ENCODE measurements at regions of chr13 and their contacts with region 1.

Region 1: GRCh38 chr13:49936085-49936940 is at the start of gene SPRYD7:
- DNase-seq: peak; percentile 98
- ATAC-seq: peak; percentile 97
- H3K4me3 ChIP-seq: peak within 1 kb of the TSS; percentile 76 to 94 (median 84)
- H3K4me3 Mint-ChIP-seq: peak within 1 kb of the TSS; percentile 88
- H3K27ac ChIP-seq: peak within 1 kb of the TSS; percentile 64 to 90
- H3K27ac Mint-ChIP-seq: peak within 1 kb of the TSS; percentile 86
- H3K4me1 ChIP-seq: peaks cover 15 to 17% of the 10 kb centered on the region in 2 donors
- H3K4me1 Mint-ChIP-seq: peaks cover 31% of the 10 kb centered on the region
- H3K27me3 ChIP-seq: no peaks in the 10 kb centered on the region
- H3K27me3 Mint-ChIP-seq: no peaks in the 10 kb centered on the region
- CTCF ChIP-seq: peak; percentile 80
- total RNA-seq, gene SPRYD7: 3.8 and 4.5 TPM in 2 replicates

Region 2: GRCh38 chr13:48975856-48976575 is 960.3 kb before region 1 on chr13 and contains the start of gene FNDC3A:
- CTCF ChIA-PET with region 1: no interaction called
- POLR2A ChIA-PET with region 1: no interaction called
- intact Hi-C with region 1: loop called (anchors 2 kb)
- DNase-seq: peak; percentile 93
- ATAC-seq: peak; percentile 78
- H3K4me3 ChIP-seq: peak within 1 kb of the TSS; percentile 85 to 95 (median 88)
- H3K4me3 Mint-ChIP-seq: peak within 1 kb of the TSS; percentile 98
- H3K27ac ChIP-seq: peak within 1 kb of the TSS; percentile 95 to 96
- H3K27ac Mint-ChIP-seq: peak within 1 kb of the TSS; percentile 100
- H3K4me1 ChIP-seq: peaks cover 40 to 46% of the 10 kb centered on the region in 2 donors
- H3K4me1 Mint-ChIP-seq: peaks cover 45% of the 10 kb centered on the region
- H3K27me3 ChIP-seq: no peaks in the 10 kb centered on the region
- H3K27me3 Mint-ChIP-seq: no peaks in the 10 kb centered on the region
- CTCF ChIP-seq: no peak
- total RNA-seq, gene FNDC3A: 37.1 and 38.6 TPM in 2 replicates

Region 3: GRCh38 chr13:49585220-49586157 is 350.8 kb before region 1 on chr13 and contains the start of gene RCBTB1:
- CTCF ChIA-PET with region 1: no interaction called
- POLR2A ChIA-PET with region 1: no interaction called
- intact Hi-C with region 1: loop called (anchors 1 kb)
- DNase-seq: peak; percentile 89
- ATAC-seq: peak; percentile 88
- H3K4me3 ChIP-seq: peak within 1 kb of the TSS; percentile 85 to 91 (median 87)
- H3K4me3 Mint-ChIP-seq: peak within 1 kb of the TSS; percentile 96
- H3K27ac ChIP-seq: peak within 1 kb of the TSS; percentile 88 to 90
- H3K27ac Mint-ChIP-seq: peak within 1 kb of the TSS; percentile 92
- H3K4me1 ChIP-seq: peaks cover 17 to 23% of the 10 kb centered on the region in 2 donors
- H3K4me1 Mint-ChIP-seq: peaks cover 29% of the 10 kb centered on the region
- H3K27me3 ChIP-seq: no peaks in the 10 kb centered on the region
- H3K27me3 Mint-ChIP-seq: no peaks in the 10 kb centered on the region
- CTCF ChIP-seq: no peak
- total RNA-seq, gene RCBTB1: 35.2 and 42.1 TPM in 2 replicates

Region 4: GRCh38 chr13:49690992-49691886 is 245.1 kb before region 1 on chr13 and contains the start of gene EBPL:
- CTCF ChIA-PET with region 1: no interaction called
- POLR2A ChIA-PET with region 1: interaction called, 3 read pairs
- intact Hi-C with region 1: loop called (anchors 1 kb)
- DNase-seq: peak; percentile 87
- ATAC-seq: peak; percentile 99
- H3K4me3 ChIP-seq: peak within 1 kb of the TSS; percentile 56 to 82 (median 78)
- H3K4me3 Mint-ChIP-seq: peak within 1 kb of the TSS; percentile 88
- H3K27ac ChIP-seq: peak within 1 kb of the TSS; percentile 19 to 73
- H3K27ac Mint-ChIP-seq: peak within 1 kb of the TSS; percentile 42
- H3K4me1 ChIP-seq: peaks cover 9 to 13% of the 10 kb centered on the region in 2 donors
- H3K4me1 Mint-ChIP-seq: peaks cover 26% of the 10 kb centered on the region
- H3K27me3 ChIP-seq: no peaks in the 10 kb centered on the region
- H3K27me3 Mint-ChIP-seq: no peaks in the 10 kb centered on the region
- CTCF ChIP-seq: no peak
- total RNA-seq, gene EBPL: 16.2 and 20.1 TPM in 2 replicates

Region 5: GRCh38 chr13:49996951-49997895 is 60.9 kb after region 1 on chr13 and contains the start of gene TRIM13:
- CTCF ChIA-PET with region 1: interaction called, 9 read pairs
- POLR2A ChIA-PET with region 1: interaction called, 6 read pairs
- intact Hi-C with region 1: loop called (anchors 1 kb)
- DNase-seq: peak; percentile 93
- ATAC-seq: peak; percentile 74
- H3K4me3 ChIP-seq: peak within 1 kb of the TSS; percentile 78 to 96 (median 94)
- H3K4me3 Mint-ChIP-seq: peak within 1 kb of the TSS; percentile 90
- H3K27ac ChIP-seq: peak within 1 kb of the TSS; percentile 93
- H3K27ac Mint-ChIP-seq: peak within 1 kb of the TSS; percentile 96
- H3K4me1 ChIP-seq: peaks cover 30 to 42% of the 10 kb centered on the region in 2 donors
- H3K4me1 Mint-ChIP-seq: peaks cover 49% of the 10 kb centered on the region
- H3K27me3 ChIP-seq: no peaks in the 10 kb centered on the region
- H3K27me3 Mint-ChIP-seq: no peaks in the 10 kb centered on the region
- CTCF ChIP-seq: peak; percentile 89
- total RNA-seq, gene TRIM13: 45.9 and 52.8 TPM in 2 replicates

Region 6: GRCh38 chr13:50594276-50595051 is 658.2 kb after region 1 on chr13:
- CTCF ChIA-PET with region 1: interaction called, 3 read pairs
- POLR2A ChIA-PET with region 1: no interaction called
- intact Hi-C with region 1: loop called (anchors 5 kb)
- DNase-seq: peak; percentile 83
- ATAC-seq: peak; percentile 89
- H3K4me3 ChIP-seq: peak overlapping the region in 2 of 5 experiments; percentile 10 to 35
- H3K4me3 Mint-ChIP-seq: peak overlapping the region; percentile 75
- H3K27ac ChIP-seq: peak overlapping the region; percentile 79 to 87
- H3K27ac Mint-ChIP-seq: peak overlapping the region; percentile 93
- H3K4me1 ChIP-seq: peaks cover 95 to 99% of the 10 kb centered on the region in 2 donors
- H3K4me1 Mint-ChIP-seq: peaks cover 85% of the 10 kb centered on the region
- H3K27me3 ChIP-seq: no peaks in the 10 kb centered on the region
- H3K27me3 Mint-ChIP-seq: no peaks in the 10 kb centered on the region
- CTCF ChIP-seq: no peak

Measured in B cell (primary cell).